Activated CD4-positive, alpha-beta T cell treated with anti-CD3 and anti-CD28 coated beads, Interleukin-2, amount 10 ng/mL, durations not matched to agents 7 days and 5 days (primary cell): ENCODE measurements at regions of chr12 and their contacts with region 1.

Region 1: GRCh38 chr12:104505095-104505818 is 48.5 kb downstream of the CHST11 start:
- DNase-seq: no peak
- H3K4me3 Mint-ChIP-seq: no peak overlapping the region
- H3K27ac Mint-ChIP-seq: no peak overlapping the region
- H3K4me1 Mint-ChIP-seq: peaks cover 86% of the 10 kb centered on the region
- H3K27me3 Mint-ChIP-seq: no peaks in the 10 kb centered on the region

Region 2: GRCh38 chr12:104494137-104494792 is 11.0 kb before region 1 on chr12:
- CTCF ChIA-PET with region 1: interaction called, 11 read pairs
- POLR2A ChIA-PET with region 1: no interaction called
- DNase-seq: peak; percentile 48
- H3K4me3 Mint-ChIP-seq: peak overlapping the region; percentile 56
- H3K27ac Mint-ChIP-seq: peak overlapping the region; percentile 90
- H3K4me1 Mint-ChIP-seq: peaks cover 90% of the 10 kb centered on the region
- H3K27me3 Mint-ChIP-seq: no peaks in the 10 kb centered on the region